HepG2 (cell line): ENCODE measurements at regions of chr6 and their contacts with region 1.

Region 1: DNA sequence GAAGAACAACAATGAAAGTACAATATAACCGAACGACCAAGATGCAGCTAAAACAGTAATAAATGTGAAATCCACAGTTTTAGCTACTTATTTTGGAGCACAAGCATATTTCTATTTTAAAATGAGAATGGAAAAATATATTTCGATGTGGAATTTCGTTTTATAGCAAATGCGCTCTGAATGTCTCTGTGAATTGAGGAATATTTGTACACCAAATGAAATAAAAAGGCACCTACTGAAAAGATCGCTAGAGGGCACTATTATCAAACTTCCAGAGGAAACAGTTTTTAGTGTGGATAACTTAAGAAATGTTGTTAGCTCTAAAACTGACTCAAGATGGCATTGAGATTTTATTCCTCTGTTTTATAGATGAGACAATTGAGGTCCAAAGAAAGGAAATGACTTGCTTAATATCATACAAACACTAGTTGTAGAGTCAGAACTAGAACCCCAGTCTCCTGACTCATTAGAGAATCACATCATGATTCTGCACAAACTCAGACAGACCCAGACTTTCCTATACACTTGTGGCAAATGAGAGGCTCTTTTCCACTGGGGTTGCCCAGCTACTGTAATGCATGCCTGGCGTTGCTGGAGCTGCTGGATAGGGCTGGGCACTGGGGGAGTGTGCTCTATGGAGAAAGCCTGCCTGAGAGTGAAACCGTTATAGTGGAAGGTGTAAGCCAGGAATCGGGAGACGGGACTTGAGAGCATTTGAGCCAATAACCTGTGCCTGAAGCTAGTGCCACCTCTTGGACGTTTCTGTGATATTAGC is 51.9 kb downstream of the GCLC start:
- DNase-seq: peak; percentile 59
- ATAC-seq: peak; percentile 89
- H3K4me3 ChIP-seq: peak overlapping the region; percentile 21 to 65 (median 36); a peak in 5 of 6 replicates
- H3K27ac ChIP-seq: no peak overlapping the region
- H3K4me1 ChIP-seq: peaks cover 17% of the 10 kb centered on the region
- H3K27me3 ChIP-seq: no peaks in the 10 kb centered on the region
- CTCF ChIP-seq: peak; percentile 81
- EP300 ChIP-seq: no peak
- POLR2A ChIP-seq: no peak
- RAD21 ChIP-seq: peak; percentile 63

Region 2: GRCh38 chr6:53524455-53524815 is 31.4 kb after region 1 on chr6:
- CTCF ChIA-PET with region 1: no interaction called
- POLR2A ChIA-PET with region 1: no interaction called
- in situ Hi-C with region 1: no loop called
- intact Hi-C with region 1: no loop called
- DNase-seq: no peak
- ATAC-seq: no peak
- H3K4me3 ChIP-seq: no peak overlapping the region
- H3K27ac ChIP-seq: no peak overlapping the region
- H3K4me1 ChIP-seq: peaks cover 27% of the 10 kb centered on the region
- H3K27me3 ChIP-seq: no peaks in the 10 kb centered on the region
- CTCF ChIP-seq: no peak
- EP300 ChIP-seq: no peak
- POLR2A ChIP-seq: no peak
- RAD21 ChIP-seq: no peak

Region 3: DNA sequence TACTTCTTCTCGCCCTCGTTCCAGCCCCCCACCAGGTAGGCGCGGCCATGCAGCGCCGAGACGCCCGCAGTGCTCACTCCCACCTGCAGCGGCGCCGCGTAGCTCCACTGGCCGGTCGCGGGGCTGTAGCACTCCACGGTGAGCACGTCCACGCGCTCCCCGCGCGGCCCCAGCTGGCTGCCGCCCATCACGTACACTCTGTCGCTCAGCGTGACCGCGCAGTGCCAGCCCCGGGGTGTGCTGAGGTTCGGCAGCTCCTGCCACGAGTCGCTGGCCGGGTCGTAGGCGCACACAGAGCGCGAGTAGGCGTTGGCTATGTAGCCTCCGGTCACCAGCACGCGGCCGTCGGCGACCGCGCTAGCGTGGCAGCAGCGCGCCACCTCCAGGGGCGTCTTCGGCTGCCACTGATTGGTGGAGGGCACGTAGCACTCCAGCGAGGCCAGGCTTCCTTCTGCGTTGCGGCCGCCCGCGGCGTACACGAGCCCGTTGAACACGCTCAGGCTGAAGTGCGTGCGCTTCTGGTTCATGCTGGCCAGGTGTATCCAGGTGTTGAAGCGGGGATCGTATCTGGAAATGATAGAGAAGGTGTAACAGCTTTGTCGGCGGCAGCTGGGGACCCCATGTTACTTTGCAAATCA is 158.8 kb after region 1 on chr6:
- CTCF ChIA-PET with region 1: interaction called, 28 read pairs
- POLR2A ChIA-PET with region 1: interaction called, 9 read pairs
- in situ Hi-C with region 1: no loop called
- intact Hi-C with region 1: loop called (anchors 1 kb)
- DNase-seq: peak; percentile 86
- ATAC-seq: peak; percentile 98
- H3K4me3 ChIP-seq: peak overlapping the region; percentile 65 to 84 (median 73)
- H3K27ac ChIP-seq: peak overlapping the region; percentile 85
- H3K4me1 ChIP-seq: peaks cover 27% of the 10 kb centered on the region
- H3K27me3 ChIP-seq: no peaks in the 10 kb centered on the region; a peak in 1 of 5 replicates
- CTCF ChIP-seq: peak; percentile 93
- EP300 ChIP-seq: peak in 1 of 2 experiments; percentile 40; a peak in 2 of 4 replicates
- POLR2A ChIP-seq: peak; percentile 88
- RAD21 ChIP-seq: peak; percentile 79

Region 4: GRCh38 chr6:53679446-53679933 is 186.4 kb after region 1 on chr6:
- CTCF ChIA-PET with region 1: interaction called, 17 read pairs
- POLR2A ChIA-PET with region 1: interaction called, 5 read pairs
- in situ Hi-C with region 1: no loop called
- intact Hi-C with region 1: loop called (anchors 1 kb)
- DNase-seq: peak; percentile 62
- ATAC-seq: peak; percentile 89
- H3K4me3 ChIP-seq: no peak overlapping the region
- H3K27ac ChIP-seq: no peak overlapping the region
- H3K4me1 ChIP-seq: no peaks in the 10 kb centered on the region
- H3K27me3 ChIP-seq: 0 out of 5 replicates have a peak, but pooled peaks cover 0 to 4% of the 10 kb centered on the region in 2 experiments
- CTCF ChIP-seq: peak; percentile 47
- EP300 ChIP-seq: no peak
- POLR2A ChIP-seq: no peak
- RAD21 ChIP-seq: peak; percentile 54; the same call in 1 of the 2 replicates

Region 5: GRCh38 chr6:53718597-53719460 is 225.8 kb after region 1 on chr6:
- CTCF ChIA-PET with region 1: interaction called, 68 read pairs
- POLR2A ChIA-PET with region 1: no interaction called
- in situ Hi-C with region 1: loop called (anchors 5 kb)
- intact Hi-C with region 1: loop called (anchors 2 kb)
- DNase-seq: peak; percentile 72
- ATAC-seq: peak; percentile 89
- H3K4me3 ChIP-seq: no peak overlapping the region
- H3K27ac ChIP-seq: no peak overlapping the region
- H3K4me1 ChIP-seq: peaks cover 22% of the 10 kb centered on the region
- H3K27me3 ChIP-seq: no peaks in the 10 kb centered on the region; a peak in 1 of 5 replicates
- CTCF ChIP-seq: peak; percentile 88
- EP300 ChIP-seq: no peak
- POLR2A ChIP-seq: no peak
- RAD21 ChIP-seq: no peak

Region 6: DNA sequence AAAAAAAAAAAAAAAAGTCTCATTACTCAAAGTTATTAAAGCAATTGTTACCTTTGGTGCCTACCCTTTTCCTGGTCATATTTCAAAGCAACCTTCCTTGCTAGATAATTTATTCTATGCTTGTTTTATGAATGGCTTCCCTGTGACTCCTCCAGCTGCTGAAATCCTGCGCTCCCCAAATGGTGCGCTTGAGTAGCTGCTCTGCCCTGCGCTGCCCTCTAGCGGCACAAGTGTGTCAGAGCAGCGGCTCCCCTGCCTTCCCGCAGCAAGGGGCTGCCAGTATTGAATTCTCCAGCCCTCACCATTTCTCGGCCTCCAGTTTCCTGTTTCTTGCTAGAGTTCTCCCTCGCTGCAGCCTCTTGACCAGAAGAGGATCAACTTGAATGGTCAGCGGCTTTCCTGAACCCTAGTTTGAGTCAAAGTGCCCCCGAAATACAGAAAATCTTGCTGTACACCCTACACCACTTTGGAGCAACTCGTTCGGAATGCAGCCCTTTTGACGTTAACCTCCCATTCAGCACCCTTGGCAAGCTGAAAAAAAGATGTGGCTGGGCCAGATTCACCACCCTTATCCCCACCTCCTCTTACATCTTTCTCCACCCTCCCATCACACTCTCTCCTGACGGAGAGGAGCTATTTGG is 232.9 kb after region 1 on chr6:
- CTCF ChIA-PET with region 1: interaction called, 68 read pairs
- POLR2A ChIA-PET with region 1: interaction called, 4 read pairs
- in situ Hi-C with region 1: loop called (anchors 5 kb)
- intact Hi-C with region 1: loop called (anchors 1 kb)
- DNase-seq: peak; percentile 72
- ATAC-seq: peak; percentile 94
- H3K4me3 ChIP-seq: no peak overlapping the region
- H3K27ac ChIP-seq: no peak overlapping the region
- H3K4me1 ChIP-seq: peaks cover 17% of the 10 kb centered on the region; the same call in 1 of the 2 replicates
- H3K27me3 ChIP-seq: no peaks in the 10 kb centered on the region
- CTCF ChIP-seq: peak; percentile 95
- EP300 ChIP-seq: no peak
- POLR2A ChIP-seq: no peak
- RAD21 ChIP-seq: peak; percentile 82

Region 7: GRCh38 chr6:53956068-53956711 is 463.1 kb after region 1 on chr6:
- CTCF ChIA-PET with region 1: no interaction called
- POLR2A ChIA-PET with region 1: no interaction called
- in situ Hi-C with region 1: loop called (anchors 10 kb)
- intact Hi-C with region 1: loop called (anchors 5 kb)
- DNase-seq: peak; percentile 79
- ATAC-seq: peak; percentile 100
- H3K4me3 ChIP-seq: no peak overlapping the region
- H3K27ac ChIP-seq: no peak overlapping the region
- H3K4me1 ChIP-seq: no peaks in the 10 kb centered on the region
- H3K27me3 ChIP-seq: no peaks in the 10 kb centered on the region; a peak in 1 of 5 replicates
- CTCF ChIP-seq: peak; percentile 98
- EP300 ChIP-seq: no peak
- POLR2A ChIP-seq: no peak
- RAD21 ChIP-seq: peak; percentile 92